Dorsolateral prefrontal cortex (tissue), 120 donors: ENCODE measurements at regions of chr12 and their contacts with region 1.

Region 1: DNA sequence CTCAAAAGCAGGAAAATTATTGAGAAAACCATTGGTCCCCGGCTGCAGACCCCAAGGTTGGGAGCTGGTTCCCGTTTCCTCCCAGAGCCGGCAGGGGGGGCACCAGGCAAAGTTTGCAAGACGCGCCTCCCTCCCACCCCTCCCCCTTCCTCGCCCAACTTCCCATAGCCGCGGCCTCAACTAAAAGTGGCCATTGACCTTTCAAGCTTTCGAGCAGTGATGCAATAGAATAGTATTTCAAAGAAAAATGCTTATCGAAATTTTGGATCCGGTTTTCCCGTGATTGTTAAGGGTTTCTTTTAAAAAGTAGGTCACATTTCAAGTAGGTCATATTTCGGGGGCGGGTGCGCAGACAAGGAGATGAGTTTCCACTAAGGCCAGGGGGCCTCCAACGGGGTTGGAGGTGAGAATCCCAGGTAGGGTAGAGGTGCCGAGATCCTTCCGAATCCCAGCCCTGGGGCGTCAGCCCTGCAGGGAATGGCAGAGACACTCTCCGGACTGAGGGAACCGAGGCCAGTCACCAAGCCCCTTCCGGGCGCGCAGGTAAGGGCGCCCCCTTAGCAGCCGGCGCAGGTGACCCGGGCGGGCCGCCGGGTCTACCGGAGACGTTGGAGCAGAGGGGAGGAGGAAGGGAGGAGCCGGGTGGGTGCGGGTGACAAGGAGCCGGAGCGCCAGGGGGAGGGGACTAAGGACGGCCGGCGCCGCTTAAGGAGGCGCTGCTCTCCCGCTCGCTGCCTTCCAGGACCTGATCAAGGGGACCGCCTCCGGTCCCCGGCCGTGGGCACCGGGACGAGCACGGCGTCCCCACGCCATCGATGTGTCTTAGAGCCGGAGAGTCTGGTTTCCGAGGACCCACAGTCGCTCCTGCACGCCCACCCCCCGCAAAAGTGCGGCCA is 2.6 kb upstream of the SOCS2 start:
- DNase-seq: peak; percentile 37 to 81 (median 70)
- H3K4me3 ChIP-seq: peak overlapping the region; percentile 56 to 93 (median 77)
- H3K27ac ChIP-seq: peak overlapping the region in 58 of 59 donors; percentile 15 to 90 (median 80)
- H3K27me3 ChIP-seq: peaks cover 0 to 31% (median 7%) of the 10 kb centered on the region in 45 donors
- CTCF ChIP-seq: peak; percentile 64 to 95 (median 82)

Region 2: GRCh38 chr12:93502802-93503623 is 66.9 kb before region 1 on chr12:
- intact Hi-C with region 1: loop called in 1 of 2 experiments (anchors 5 kb)
- DNase-seq: peak in 4 of 10 donors; percentile 26 to 48 (median 34)
- H3K4me3 ChIP-seq: no peak overlapping the region
- H3K27ac ChIP-seq: no peak overlapping the region
- H3K27me3 ChIP-seq: no peaks in the 10 kb centered on the region
- CTCF ChIP-seq: peak; percentile 68 to 91 (median 83)

Region 3: DNA sequence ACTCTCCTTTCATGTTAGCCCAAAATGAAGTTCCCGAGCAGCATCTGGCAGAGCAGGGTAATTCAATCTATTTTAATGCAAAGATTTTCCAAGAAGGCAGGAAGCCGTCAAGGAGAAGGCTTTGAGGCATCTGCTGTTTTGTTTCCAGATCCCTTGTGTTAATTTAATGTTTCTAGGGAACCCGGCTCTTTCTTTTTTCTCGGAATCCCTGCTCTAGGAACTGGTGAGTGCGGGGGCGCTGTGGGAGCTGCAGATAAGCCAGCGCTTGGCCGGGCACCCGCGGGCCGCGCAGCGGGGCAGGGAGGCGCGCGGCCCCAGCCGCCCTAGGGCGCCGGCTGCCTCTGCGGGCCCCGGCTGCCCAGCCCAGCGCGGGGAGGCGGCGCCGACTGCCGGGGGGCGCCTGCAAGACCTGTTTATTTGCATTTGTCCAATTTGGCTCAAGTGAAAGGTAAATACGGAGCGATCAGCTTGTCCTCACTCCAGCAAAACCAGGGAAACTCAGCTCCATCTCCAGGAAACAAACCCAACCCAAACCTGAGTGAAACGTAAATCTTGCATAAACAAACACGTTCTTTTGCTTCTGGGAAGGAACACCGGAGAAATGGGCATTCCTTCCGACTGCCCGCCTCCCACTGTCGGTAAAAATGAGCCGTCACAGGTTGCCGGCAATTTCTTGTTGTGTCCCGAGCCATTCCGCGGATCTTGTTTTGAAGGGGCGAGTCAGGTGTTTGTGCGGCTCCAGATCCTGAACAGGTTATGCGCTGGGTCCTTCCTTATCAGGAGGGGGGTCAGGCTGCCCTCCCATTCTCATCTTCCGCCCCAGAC is 172.4 kb after region 1 on chr12:
- intact Hi-C with region 1: loop called (anchors 5 kb)
- DNase-seq: peak; percentile 63 to 81 (median 73)
- H3K4me3 ChIP-seq: peak overlapping the region; percentile 43 to 80 (median 64)
- H3K27ac ChIP-seq: peak overlapping the region in 55 of 59 donors; percentile 4 to 86 (median 70)
- H3K27me3 ChIP-seq: no peaks in the 10 kb centered on the region
- CTCF ChIP-seq: peak in 52 of 56 donors; percentile 5 to 69 (median 40)

Region 4: GRCh38 chr12:93825931-93826555 is 256.1 kb after region 1 on chr12:
- intact Hi-C with region 1: loop called in 1 of 2 experiments (anchors 10 kb)
- DNase-seq: no peak
- H3K4me3 ChIP-seq: peak overlapping the region in 1 of 59 donors; percentile 1
- H3K27ac ChIP-seq: peak overlapping the region in 10 of 59 donors; percentile 0 to 57 (median 22)
- H3K27me3 ChIP-seq: no peaks in the 10 kb centered on the region
- CTCF ChIP-seq: no peak

Region 5: GRCh38 chr12:93979189-93979588 is 409.3 kb after region 1 on chr12:
- intact Hi-C with region 1: loop called (anchors 5 to 10 kb)
- DNase-seq: no peak
- H3K4me3 ChIP-seq: no peak overlapping the region
- H3K27ac ChIP-seq: no peak overlapping the region
- H3K27me3 ChIP-seq: no peaks in the 10 kb centered on the region
- CTCF ChIP-seq: peak in 45 of 56 donors; percentile 2 to 56 (median 37)